ENCODE measurements at regions of chr17 and their contacts with region 1.

Region 1: DNA sequence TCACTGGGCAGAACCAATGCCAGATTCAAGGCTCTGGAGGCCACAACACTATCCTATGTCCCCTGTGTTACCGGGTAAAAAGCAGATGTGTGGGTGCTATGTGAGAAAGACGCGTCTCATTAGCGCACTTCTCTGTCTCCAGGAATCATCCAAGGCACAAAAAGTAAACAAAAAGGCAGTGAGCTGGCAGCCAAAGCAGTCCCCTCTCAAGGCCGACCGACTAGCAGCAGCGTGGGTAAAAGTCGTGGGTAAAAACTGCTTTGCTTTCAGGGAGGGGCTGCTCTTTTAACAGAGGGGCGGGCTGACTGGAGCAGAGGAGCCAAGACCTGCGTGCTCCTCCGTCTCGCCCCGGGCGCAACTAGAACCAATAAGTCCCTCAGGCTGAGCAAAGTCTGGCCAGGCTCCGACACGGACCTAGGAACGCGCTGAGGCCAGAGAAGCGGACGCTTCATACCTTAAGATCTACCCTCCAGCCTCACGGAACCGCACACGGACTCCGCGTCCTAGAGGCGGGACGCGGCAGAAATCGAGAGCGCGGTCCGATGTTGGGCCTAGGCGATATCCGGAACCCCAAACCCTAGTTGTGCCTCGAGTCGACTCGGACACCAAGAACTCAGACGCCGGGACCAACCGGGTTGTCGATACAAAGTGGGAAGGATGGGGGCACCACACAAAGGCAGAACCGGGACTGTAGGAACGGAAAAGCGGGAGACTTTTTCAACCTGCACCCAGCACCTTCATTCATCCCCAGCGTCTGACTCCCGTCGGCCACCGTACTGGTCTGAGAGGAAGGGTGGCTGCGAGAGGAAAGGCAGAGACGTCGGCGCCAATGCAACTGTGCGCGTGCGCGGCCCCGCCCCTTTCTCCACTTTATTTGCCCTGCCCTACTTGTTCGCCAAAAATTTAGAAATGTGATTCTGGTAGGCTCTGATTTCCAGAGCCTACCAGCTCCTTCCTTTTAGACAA is at the start of gene INTS2:
- DNase-seq: peak; percentile 97
- ATAC-seq: peak; percentile 92
- H3K4me3 Mint-ChIP-seq: peak within 1 kb of the TSS; percentile 88
- H3K27ac Mint-ChIP-seq: peak within 1 kb of the TSS; percentile 94
- H3K4me1 Mint-ChIP-seq: peaks cover 17% of the 10 kb centered on the region
- H3K27me3 Mint-ChIP-seq: no peaks in the 10 kb centered on the region
- total RNA-seq, gene INTS2: 23.4 to 27.9 TPM

Region 2: GRCh38 chr17:60677308-60678124 is 1250.0 kb before region 1 on chr17 and contains the start of gene BCAS3:
- CTCF ChIA-PET with region 1: no interaction called
- POLR2A ChIA-PET with region 1: no interaction called
- intact Hi-C with region 1: loop called in 1 of 2 experiments (anchors 1 kb)
- DNase-seq: peak; percentile 98
- ATAC-seq: peak; percentile 97
- H3K4me3 Mint-ChIP-seq: peak within 1 kb of the TSS; percentile 95
- H3K27ac Mint-ChIP-seq: peak within 1 kb of the TSS; percentile 84
- H3K4me1 Mint-ChIP-seq: peaks cover 16% of the 10 kb centered on the region
- H3K27me3 Mint-ChIP-seq: no peaks in the 10 kb centered on the region
- total RNA-seq, gene BCAS3: 7.2 to 7.5 TPM

Region 3: GRCh38 chr17:61862975-61863800 is 64.3 kb before region 1 on chr17 and contains the start of gene BRIP1:
- CTCF ChIA-PET with region 1: no interaction called
- POLR2A ChIA-PET with region 1: no interaction called
- intact Hi-C with region 1: loop called (anchors 1 to 2 kb)
- DNase-seq: peak; percentile 95
- ATAC-seq: peak; percentile 97
- H3K4me3 Mint-ChIP-seq: peak within 1 kb of the TSS; percentile 96
- H3K27ac Mint-ChIP-seq: peak within 1 kb of the TSS; percentile 91
- H3K4me1 Mint-ChIP-seq: peaks cover 26% of the 10 kb centered on the region
- H3K27me3 Mint-ChIP-seq: no peaks in the 10 kb centered on the region
- total RNA-seq, gene BRIP1: 15.4 to 16.2 TPM